ENCODE measurements at regions of chr5 and their contacts with region 1.

Region 1: DNA sequence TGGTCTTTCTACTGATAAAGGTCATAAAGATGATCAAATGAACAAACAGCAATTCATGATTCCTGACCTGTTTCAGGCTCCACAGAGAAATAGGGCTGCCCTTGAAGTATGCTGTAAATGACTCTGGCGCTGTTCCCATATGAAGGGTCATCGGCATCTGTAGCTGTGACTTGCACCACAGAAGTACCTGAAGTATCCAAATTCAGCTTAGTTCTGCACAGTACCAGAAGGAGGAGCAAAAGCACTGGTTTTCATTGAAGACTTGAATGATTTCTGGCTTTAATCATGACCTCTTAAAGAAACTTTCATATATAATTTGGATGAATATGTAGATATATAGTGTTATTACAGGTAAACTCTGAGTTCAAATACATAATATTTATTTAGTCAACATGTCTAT is 109.1 kb downstream of the CDH10 start:
- DNase-seq: peak; percentile 36
- ATAC-seq: peak; percentile 62
- H3K4me3 ChIP-seq: no peak overlapping the region
- H3K27ac ChIP-seq: no peak overlapping the region
- H3K4me1 ChIP-seq: no peaks in the 10 kb centered on the region
- H3K27me3 ChIP-seq: no peaks in the 10 kb centered on the region
- CTCF ChIP-seq: peak; percentile 54

Region 2: DNA sequence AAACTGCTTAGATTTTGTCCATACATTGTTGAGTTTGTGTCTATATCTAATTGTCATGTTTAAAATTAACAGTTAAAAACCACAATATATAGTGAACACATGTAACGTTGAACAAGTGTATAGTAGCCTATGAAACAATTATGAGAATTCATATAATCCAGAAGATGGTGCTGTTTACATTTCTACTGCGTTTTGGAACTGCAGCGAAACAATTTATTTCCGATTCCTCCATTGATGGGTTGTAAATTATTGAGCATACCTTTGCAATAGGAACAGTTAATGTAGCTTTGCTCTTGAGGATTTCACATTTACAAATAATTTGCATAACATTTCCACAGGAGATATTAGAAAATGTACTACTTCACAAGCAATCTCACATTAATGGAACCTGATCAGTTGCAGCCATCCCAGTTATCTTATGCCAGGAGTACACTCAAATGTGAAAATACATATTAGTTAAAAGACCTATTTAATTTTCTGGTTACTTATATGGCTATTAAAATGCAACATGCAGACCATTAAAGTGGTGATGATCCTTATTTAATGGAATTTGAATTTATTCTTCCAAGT is 302.6 kb before region 1 on chr5:
- CTCF ChIA-PET with region 1: no interaction called
- POLR2A ChIA-PET with region 1: no interaction called
- intact Hi-C with region 1: loop called (anchors 2 kb)
- DNase-seq: peak; percentile 39
- ATAC-seq: no peak; the same call in 1 of the 2 replicates
- H3K4me3 ChIP-seq: no peak overlapping the region
- H3K27ac ChIP-seq: no peak overlapping the region
- H3K4me1 ChIP-seq: no peaks in the 10 kb centered on the region
- H3K27me3 ChIP-seq: no peaks in the 10 kb centered on the region
- CTCF ChIP-seq: peak; percentile 72

Region 3: GRCh38 chr5:24633712-24634325 is 98.2 kb after region 1 on chr5:
- CTCF ChIA-PET with region 1: interaction called, 4 read pairs
- POLR2A ChIA-PET with region 1: no interaction called
- intact Hi-C with region 1: loop called (anchors 2 kb)
- DNase-seq: peak; percentile 77
- ATAC-seq: peak; percentile 45; the same call in 1 of the 2 replicates
- H3K4me3 ChIP-seq: no peak overlapping the region
- H3K27ac ChIP-seq: no peak overlapping the region
- H3K4me1 ChIP-seq: no peaks in the 10 kb centered on the region
- H3K27me3 ChIP-seq: no peaks in the 10 kb centered on the region
- CTCF ChIP-seq: peak; percentile 81